ENCODE measurements at regions of chr1 and their contacts with region 1.

Region 1: DNA sequence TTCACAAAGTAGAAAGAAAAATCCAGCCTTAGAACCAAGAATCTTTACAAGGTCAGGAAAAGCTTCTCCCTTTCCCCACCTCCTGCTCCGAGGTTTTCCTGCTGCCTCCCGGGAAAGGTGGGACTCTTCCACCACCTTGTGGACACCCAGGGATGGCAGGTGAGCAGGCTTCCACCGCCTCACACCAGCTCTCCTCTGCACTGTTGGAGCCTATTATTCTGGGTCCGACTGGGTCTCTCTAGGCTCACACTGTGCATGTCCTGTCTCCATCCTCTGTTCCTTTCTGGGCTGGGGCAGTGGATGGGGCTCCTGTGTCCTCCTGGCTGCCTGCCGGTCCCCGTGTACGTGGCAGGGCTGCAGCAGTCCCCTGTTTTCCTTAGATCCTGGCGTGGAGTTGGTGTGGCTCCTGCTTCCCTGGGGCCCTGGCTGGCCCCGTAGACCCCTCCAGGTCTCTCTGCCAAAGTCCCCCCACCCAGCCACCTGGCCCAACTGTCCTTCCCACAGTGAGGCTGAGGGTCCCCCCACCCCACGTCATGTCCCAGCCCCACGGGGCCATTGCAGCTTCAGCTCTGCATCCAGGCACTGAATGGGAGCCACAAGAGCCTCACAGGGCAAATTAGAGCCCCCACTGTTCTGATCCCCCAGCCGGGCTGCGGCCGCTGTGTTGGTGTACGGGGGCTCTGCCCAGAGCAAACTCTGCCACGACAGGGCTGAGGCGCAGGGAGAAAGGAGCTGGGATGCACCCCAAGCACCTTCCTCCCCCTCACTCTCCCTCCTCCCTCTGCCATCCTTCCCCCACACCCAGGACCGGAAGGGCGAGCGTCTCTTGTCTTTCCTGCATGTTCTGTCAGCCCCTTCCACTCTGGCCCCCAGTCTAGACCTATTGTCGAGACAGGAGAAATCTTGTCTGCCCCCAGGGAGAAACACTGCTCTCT is 3.3 kb upstream of the SLC45A1 start:
- DNase-seq: peak in 8 of 9 donors; percentile 14 to 56 (median 46)
- ATAC-seq: peak; percentile 56
- H3K4me3 ChIP-seq: no peak overlapping the region
- H3K4me3 Mint-ChIP-seq: peak overlapping the region in 5 of 10 donors; percentile 9 to 48 (median 32)
- H3K27ac ChIP-seq: no peak overlapping the region
- H3K27ac Mint-ChIP-seq: no peak overlapping the region
- H3K4me1 ChIP-seq: peaks cover 4 to 11% of the 10 kb centered on the region in 2 donors
- H3K4me1 Mint-ChIP-seq: peaks cover 6 to 26% (median 23%) of the 10 kb centered on the region in 7 donors
- H3K27me3 ChIP-seq: peaks cover 5 to 8% of the 10 kb centered on the region in 2 donors
- H3K27me3 Mint-ChIP-seq: peaks cover 7 to 51% (median 33%) of the 10 kb centered on the region in 5 donors

Region 2: DNA sequence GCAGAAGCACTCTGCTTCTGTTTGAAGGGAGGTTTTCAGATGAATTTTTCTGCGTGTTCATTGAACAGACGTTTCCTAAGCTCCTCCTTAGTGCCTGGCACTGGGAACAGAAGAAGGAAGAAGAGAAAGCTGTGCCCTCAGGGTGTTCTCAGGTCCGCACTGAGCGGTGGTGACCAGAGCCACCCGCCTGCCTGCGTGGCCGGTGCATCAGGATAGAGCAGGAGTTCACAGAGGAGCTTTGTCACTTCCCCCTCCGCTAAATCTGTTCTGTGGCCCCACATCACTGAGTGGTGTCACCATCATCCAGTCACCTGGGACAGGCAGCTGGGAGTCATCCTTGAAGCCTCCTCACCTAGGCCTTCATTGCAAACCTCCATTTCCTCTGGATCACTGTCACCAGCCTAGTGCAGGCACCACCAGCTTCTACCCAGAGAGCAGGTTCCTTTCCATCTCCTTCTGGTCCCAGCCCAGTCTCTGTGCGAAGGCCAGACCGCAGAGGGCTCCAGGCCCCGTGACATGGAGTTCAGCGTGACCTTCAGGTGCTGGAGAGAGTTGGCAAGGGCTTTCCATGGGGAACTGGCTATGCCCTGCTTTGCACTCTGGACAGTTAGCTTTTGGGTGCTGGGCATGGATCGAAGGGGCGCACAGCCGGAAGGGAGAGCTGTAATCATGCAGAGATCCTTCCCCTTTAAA is 331.4 kb before region 1 on chr1:
- CTCF ChIA-PET with region 1: interaction called, 4 read pairs
- POLR2A ChIA-PET with region 1: no interaction called
- intact Hi-C with region 1: loop called in 1 of 2 experiments (anchors 1 kb)
- DNase-seq: no peak
- ATAC-seq: no peak
- H3K4me3 ChIP-seq: no peak overlapping the region
- H3K4me3 Mint-ChIP-seq: no peak overlapping the region
- H3K27ac ChIP-seq: no peak overlapping the region
- H3K27ac Mint-ChIP-seq: no peak overlapping the region
- H3K4me1 ChIP-seq: peaks cover 0 to 8% of the 10 kb centered on the region in 2 donors
- H3K4me1 Mint-ChIP-seq: peaks cover 5 to 13% (median 10%) of the 10 kb centered on the region in 7 donors
- H3K27me3 ChIP-seq: no peaks in the 10 kb centered on the region
- H3K27me3 Mint-ChIP-seq: no peaks in the 10 kb centered on the region

Region 3: DNA sequence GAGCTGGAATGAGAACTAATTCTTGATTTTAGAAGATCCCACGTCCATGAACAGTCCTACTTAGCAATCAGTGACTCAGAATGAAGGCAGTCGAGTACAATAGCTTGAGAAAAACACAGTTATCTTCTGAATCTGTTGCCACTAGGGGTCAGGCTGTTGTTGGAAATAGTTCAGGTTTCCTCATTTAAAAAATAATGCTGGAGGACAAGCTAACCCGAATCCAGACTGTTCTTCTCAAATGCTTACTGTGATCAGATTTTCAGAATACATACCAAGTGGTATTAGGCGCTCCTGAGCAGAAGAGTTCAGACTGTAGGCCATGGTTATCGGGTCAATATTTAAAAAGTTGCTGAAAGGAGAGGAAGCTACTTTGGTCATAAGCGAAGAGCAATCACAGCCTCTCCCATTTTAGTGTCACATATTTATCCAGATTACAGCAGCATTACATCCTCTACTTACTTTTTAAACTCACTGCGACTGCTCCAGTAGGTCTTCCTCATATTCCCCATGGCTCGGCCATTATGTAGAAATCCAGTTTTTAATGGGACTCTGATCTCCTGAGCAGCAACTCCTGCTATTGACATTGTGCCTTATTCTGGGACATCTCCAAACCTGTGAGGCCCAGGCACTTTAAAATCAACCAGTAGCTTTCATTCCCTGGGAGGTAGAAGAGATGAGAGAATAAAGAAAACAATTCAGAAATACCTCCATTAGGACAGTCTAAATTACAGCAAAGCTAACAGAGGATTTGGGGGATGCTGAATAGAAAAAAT is 299.4 kb before region 1 on chr1:
- CTCF ChIA-PET with region 1: interaction called, 85 read pairs
- POLR2A ChIA-PET with region 1: no interaction called
- intact Hi-C with region 1: loop called in 1 of 2 experiments (anchors 1 kb)
- DNase-seq: peak in 8 of 9 donors; percentile 32 to 67 (median 58)
- ATAC-seq: peak; percentile 80
- H3K4me3 ChIP-seq: no peak overlapping the region
- H3K4me3 Mint-ChIP-seq: no peak overlapping the region
- H3K27ac ChIP-seq: no peak overlapping the region
- H3K27ac Mint-ChIP-seq: no peak overlapping the region
- H3K4me1 ChIP-seq: no peaks in the 10 kb centered on the region
- H3K4me1 Mint-ChIP-seq: peaks cover 0 to 3% (median 0%) of the 10 kb centered on the region in 7 donors
- H3K27me3 ChIP-seq: peaks cover 0 to 7% of the 10 kb centered on the region in 2 donors
- H3K27me3 Mint-ChIP-seq: peaks cover 16 to 31% (median 27%) of the 10 kb centered on the region in 5 donors

Region 4: GRCh38 chr1:9145021-9145668 is 830.5 kb after region 1 on chr1:
- CTCF ChIA-PET with region 1: no interaction called
- POLR2A ChIA-PET with region 1: no interaction called
- intact Hi-C with region 1: no loop called
- DNase-seq: no peak
- ATAC-seq: no peak
- H3K4me3 ChIP-seq: no peak overlapping the region
- H3K4me3 Mint-ChIP-seq: no peak overlapping the region
- H3K27ac ChIP-seq: no peak overlapping the region
- H3K27ac Mint-ChIP-seq: no peak overlapping the region
- H3K4me1 ChIP-seq: no peaks in the 10 kb centered on the region
- H3K4me1 Mint-ChIP-seq: peaks cover 0 to 7% (median 4%) of the 10 kb centered on the region in 7 donors
- H3K27me3 ChIP-seq: no peaks in the 10 kb centered on the region
- H3K27me3 Mint-ChIP-seq: no peaks in the 10 kb centered on the region

Measured in naive thymus-derived CD4-positive, alpha-beta T cell (primary cell).